ENCODE measurements at regions of chr2 and their contacts with region 1.

Region 1: GRCh38 chr2:105235388-105236054 is 6.0 kb upstream of the GPR45 start:
- DNase-seq: peak; percentile 91

Region 2: GRCh38 chr2:105114551-105114950 is 121.0 kb before region 1 on chr2:
- intact Hi-C with region 1: loop called (anchors 5 kb)
- DNase-seq: no peak

Region 3: DNA sequence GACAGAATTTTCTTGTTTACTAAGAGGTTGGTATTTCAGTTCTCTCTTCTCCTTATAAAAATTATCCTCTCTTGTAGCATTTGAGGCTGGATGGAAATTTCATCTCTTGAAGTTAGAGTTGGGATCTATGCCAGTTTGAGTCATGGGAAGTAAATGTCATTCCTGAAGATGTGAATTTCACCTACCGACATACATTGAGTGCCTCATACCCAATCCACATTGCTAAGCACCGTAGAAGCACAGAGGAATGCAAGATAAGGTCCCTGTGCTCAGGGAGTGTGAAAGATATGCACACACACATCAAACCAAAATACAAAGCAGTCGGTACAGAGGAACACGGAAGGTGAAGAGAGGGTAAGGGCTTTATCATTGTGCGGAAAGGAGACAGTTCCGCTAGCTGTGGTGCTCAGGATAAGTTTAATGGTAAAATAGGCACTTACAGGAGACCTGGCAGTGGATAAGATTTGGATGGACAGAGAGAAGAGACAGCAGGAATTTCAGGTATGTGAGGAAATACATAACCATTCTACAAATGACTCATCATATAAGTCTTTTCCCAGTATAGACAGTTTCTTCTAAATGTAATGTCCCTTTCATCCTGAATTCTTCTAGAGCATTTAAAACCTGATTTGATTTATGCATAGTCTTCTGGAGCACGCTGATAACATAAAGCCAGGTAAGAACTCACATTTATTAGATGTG is 1855.8 kb after region 1 on chr2:
- intact Hi-C with region 1: no loop called
- DNase-seq: no peak

Measured in posterior vena cava (tissue), 2 donors.